PC-3 (cell line): ENCODE measurements at regions of chr7 and their contacts with region 1.

Region 1: DNA sequence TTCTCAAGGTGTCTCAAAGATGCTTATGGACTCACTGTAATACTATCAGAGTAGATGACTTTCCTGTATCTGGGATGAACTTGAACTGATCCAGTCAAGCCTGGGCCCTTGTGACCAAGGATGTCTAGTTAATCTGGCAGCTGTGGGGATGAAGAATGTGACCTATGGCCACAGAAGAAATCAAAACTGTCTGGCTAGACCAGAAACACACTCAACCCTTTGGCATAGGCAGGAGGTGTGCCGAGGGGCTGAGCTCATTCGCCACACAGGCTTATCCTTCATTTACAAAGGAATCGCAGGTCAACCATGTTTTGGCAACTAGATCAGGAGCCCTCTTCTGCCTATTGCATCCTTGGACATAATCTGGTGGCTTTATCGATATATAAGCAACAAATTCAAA is 110.6 kb downstream of the ATXN7L1 start:
- DNase-seq: no peak
- ATAC-seq: no peak
- H3K4me3 ChIP-seq: no peak overlapping the region
- H3K27ac ChIP-seq: no peak overlapping the region
- H3K4me1 ChIP-seq: peaks cover 32% of the 10 kb centered on the region
- H3K27me3 ChIP-seq: no peaks in the 10 kb centered on the region
- CTCF ChIP-seq: no peak

Region 2: GRCh38 chr7:105589356-105590077 is 176.3 kb before region 1 on chr7:
- CTCF ChIA-PET with region 1: no interaction called
- POLR2A ChIA-PET with region 1: no interaction called
- intact Hi-C with region 1: no loop called
- DNase-seq: peak; percentile 92
- ATAC-seq: peak; percentile 99
- H3K4me3 ChIP-seq: no peak overlapping the region
- H3K27ac ChIP-seq: no peak overlapping the region
- H3K4me1 ChIP-seq: no peaks in the 10 kb centered on the region
- H3K27me3 ChIP-seq: no peaks in the 10 kb centered on the region
- CTCF ChIP-seq: peak; percentile 95

Region 3: GRCh38 chr7:105866102-105866801 is 100.4 kb after region 1 on chr7:
- CTCF ChIA-PET with region 1: no interaction called
- POLR2A ChIA-PET with region 1: interaction called, 10 read pairs
- intact Hi-C with region 1: no loop called
- DNase-seq: no peak
- ATAC-seq: no peak
- H3K4me3 ChIP-seq: no peak overlapping the region
- H3K27ac ChIP-seq: no peak overlapping the region
- H3K4me1 ChIP-seq: peaks cover 6% of the 10 kb centered on the region; the same call in 1 of the 2 replicates
- H3K27me3 ChIP-seq: no peaks in the 10 kb centered on the region
- CTCF ChIP-seq: no peak

Region 4: DNA sequence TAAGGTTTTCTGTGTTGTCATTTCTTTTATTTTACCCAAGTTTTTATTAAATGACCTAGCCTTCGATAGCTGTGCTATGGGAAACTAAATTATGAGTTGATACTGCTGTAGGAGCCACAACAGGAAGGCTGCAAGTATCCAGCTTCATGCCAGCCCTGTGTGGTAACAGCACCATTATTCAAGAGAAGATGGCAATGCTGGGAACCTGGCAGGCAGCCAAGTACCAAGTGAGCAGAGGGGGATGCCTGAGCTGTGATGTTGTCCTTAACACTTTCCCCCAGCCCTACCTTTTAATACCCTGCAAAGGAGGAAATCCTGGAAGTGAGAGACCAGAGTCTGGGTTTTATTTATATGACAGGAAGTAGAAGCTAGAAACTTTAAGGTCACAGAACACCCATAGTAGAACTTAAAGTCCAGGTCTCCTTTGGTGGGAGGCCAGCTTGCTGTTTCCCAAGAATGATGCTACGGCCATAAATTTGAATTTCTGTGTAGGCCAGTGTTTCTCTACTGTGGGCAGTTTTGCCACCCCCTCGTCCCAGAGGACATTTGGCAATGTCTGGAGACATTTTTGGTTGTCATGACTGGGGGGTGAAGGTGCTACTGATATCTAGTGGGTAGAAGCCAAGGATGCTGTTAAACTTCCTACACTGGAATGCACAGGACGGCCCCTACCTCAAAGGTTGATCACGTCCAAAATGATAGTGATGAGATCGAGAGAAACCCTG is 119.7 kb after region 1 on chr7:
- CTCF ChIA-PET with region 1: interaction called, 13 read pairs
- POLR2A ChIA-PET with region 1: no interaction called
- intact Hi-C with region 1: no loop called
- DNase-seq: no peak
- ATAC-seq: no peak
- H3K4me3 ChIP-seq: no peak overlapping the region
- H3K27ac ChIP-seq: no peak overlapping the region
- H3K4me1 ChIP-seq: no peaks in the 10 kb centered on the region
- H3K27me3 ChIP-seq: no peaks in the 10 kb centered on the region
- CTCF ChIP-seq: no peak

Region 5: GRCh38 chr7:105896407-105896911 is 130.6 kb after region 1 on chr7:
- CTCF ChIA-PET with region 1: interaction called, 11 read pairs
- POLR2A ChIA-PET with region 1: no interaction called
- intact Hi-C with region 1: no loop called
- DNase-seq: peak; percentile 38
- ATAC-seq: peak; percentile 98
- H3K4me3 ChIP-seq: no peak overlapping the region
- H3K27ac ChIP-seq: no peak overlapping the region
- H3K4me1 ChIP-seq: 0 out of 2 replicates have a peak, but pooled peaks cover 4% of the 10 kb centered on the region
- H3K27me3 ChIP-seq: no peaks in the 10 kb centered on the region
- CTCF ChIP-seq: no peak